ENCODE measurements at regions of chr10 and their contacts with region 1.

Region 1: DNA sequence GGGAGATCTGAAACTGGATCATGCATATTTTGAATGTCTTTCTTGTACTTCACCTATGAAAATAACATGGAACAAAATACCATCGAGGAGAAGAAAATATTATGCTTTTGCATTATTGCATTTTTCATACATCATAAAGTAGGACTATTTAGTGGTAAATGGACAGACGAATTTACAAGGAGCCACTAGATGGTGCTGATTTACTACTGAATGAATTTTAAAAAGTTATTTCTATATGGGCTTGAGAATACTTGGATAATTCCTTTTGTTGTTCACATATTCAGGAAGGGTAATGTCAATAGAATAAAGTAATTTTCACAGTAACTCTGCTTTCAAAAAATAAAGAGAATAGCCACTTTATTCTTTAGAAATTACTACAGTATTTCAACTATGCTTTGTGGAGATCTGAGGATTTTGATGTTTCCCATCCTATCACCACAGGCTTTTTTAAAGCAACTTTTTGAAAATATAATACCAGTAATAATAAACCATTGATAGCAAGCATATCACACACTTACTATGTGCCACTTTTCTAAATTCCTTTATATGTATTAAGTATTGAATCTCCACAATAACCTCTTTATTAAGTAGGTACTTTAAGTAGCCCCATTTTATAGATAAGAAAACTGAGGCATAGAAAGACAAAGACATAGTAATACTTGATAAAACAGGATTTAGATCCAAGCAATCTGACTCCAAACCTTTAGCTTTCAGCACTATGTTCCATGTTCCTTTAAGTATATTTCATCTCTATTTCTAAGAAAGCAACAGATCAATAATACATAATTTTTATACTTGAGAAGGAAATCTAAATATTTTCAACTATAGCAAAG is 38.6 kb downstream of the NEBL start:
- DNase-seq: no peak
- ATAC-seq: no peak
- H3K4me3 Mint-ChIP-seq: no peak overlapping the region
- H3K27ac Mint-ChIP-seq: no peak overlapping the region
- H3K4me1 Mint-ChIP-seq: no peaks in the 10 kb centered on the region
- H3K27me3 Mint-ChIP-seq: peaks cover 2% of the 10 kb centered on the region
- CTCF ChIP-seq: no peak

Region 2: DNA sequence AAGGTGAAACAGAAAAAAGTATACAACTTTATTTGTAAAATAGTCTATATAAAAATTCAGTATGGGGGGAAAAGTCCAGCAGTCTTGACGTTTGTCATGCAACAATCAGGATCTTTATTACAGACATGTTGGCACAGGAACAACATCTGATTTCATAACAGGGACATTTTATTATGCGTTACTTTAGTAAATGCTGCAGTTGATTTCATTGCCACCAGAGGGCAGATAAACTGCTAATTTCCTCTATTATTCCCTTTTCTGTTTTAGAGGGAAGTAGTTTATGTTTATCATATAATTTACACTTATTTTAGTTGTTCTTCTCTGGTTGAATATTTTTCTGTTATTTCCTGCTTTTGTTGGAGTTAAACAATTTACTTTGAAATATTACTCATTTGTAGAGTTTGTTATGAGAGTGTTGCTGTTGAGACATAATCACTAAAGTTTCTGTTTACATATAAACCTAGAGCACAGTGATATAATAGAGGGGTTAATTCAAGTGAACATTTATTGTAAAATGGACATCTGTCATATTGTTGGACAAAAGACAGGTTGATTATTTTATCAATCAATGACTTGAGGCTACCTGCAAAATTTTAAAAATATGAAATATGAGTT is 1039.0 kb before region 1 on chr10:
- CTCF ChIA-PET with region 1: no interaction called
- POLR2A ChIA-PET with region 1: no interaction called
- intact Hi-C with region 1: loop called (anchors 10 kb)
- DNase-seq: no peak
- ATAC-seq: no peak
- H3K4me3 Mint-ChIP-seq: no peak overlapping the region
- H3K27ac Mint-ChIP-seq: no peak overlapping the region
- H3K4me1 Mint-ChIP-seq: peaks cover 20% of the 10 kb centered on the region
- H3K27me3 Mint-ChIP-seq: peaks cover 23% of the 10 kb centered on the region
- CTCF ChIP-seq: no peak

Region 3: GRCh38 chr10:21020545-21020944 is 162.0 kb after region 1 on chr10:
- CTCF ChIA-PET with region 1: no interaction called
- POLR2A ChIA-PET with region 1: no interaction called
- intact Hi-C with region 1: loop called (anchors 2 kb)
- DNase-seq: no peak
- ATAC-seq: no peak
- H3K4me3 Mint-ChIP-seq: no peak overlapping the region
- H3K27ac Mint-ChIP-seq: no peak overlapping the region
- H3K4me1 Mint-ChIP-seq: no peaks in the 10 kb centered on the region
- H3K27me3 Mint-ChIP-seq: peaks cover 6% of the 10 kb centered on the region
- CTCF ChIP-seq: no peak

Measured in activated B cell treated with CpG ODN at 0.5 μM for 24 hours (primary cell).